B cell (primary cell): ENCODE measurements at regions of chr3 and their contacts with region 1.

Region 1: GRCh38 chr3:28348629-28349483 is at the starts of genes AZI2 and ZCWPW2:
- DNase-seq: peak; percentile 94
- ATAC-seq: peak; percentile 88
- H3K4me3 ChIP-seq: peak within 1 kb of the TSS; percentile 74 to 100 (median 92)
- H3K4me3 Mint-ChIP-seq: peak within 1 kb of the TSS; percentile 99
- H3K27ac ChIP-seq: peak within 1 kb of the TSS; percentile 96 to 99
- H3K27ac Mint-ChIP-seq: peak within 1 kb of the TSS; percentile 99
- H3K4me1 ChIP-seq: peaks cover 14 to 15% of the 10 kb centered on the region in 2 donors
- H3K4me1 Mint-ChIP-seq: peaks cover 39% of the 10 kb centered on the region
- H3K27me3 ChIP-seq: no peaks in the 10 kb centered on the region
- H3K27me3 Mint-ChIP-seq: no peaks in the 10 kb centered on the region
- CTCF ChIP-seq: peak; percentile 34
- total RNA-seq, gene AZI2: 21.1 and 29.1 TPM in 2 replicates
- total RNA-seq, gene ZCWPW2: not detected in 2 replicates

Region 2: GRCh38 chr3:27368831-27369607 is 979.8 kb before region 1 on chr3 and contains the start of gene NEK10:
- CTCF ChIA-PET with region 1: no interaction called
- POLR2A ChIA-PET with region 1: no interaction called
- intact Hi-C with region 1: loop called (anchors 2 kb)
- DNase-seq: peak; percentile 92
- ATAC-seq: peak; percentile 98
- H3K4me3 ChIP-seq: peak within 1 kb of the TSS; percentile 52 to 69 (median 61)
- H3K4me3 Mint-ChIP-seq: peak within 1 kb of the TSS; percentile 94
- H3K27ac ChIP-seq: no peak within 1 kb of the TSS
- H3K27ac Mint-ChIP-seq: peak within 1 kb of the TSS; percentile 78
- H3K4me1 ChIP-seq: peaks cover 7 to 14% of the 10 kb centered on the region in 2 donors
- H3K4me1 Mint-ChIP-seq: peaks cover 17% of the 10 kb centered on the region
- H3K27me3 ChIP-seq: no peaks in the 10 kb centered on the region
- H3K27me3 Mint-ChIP-seq: peaks cover 3% of the 10 kb centered on the region
- CTCF ChIP-seq: no peak
- total RNA-seq, gene NEK10: 0.36 and 0.49 TPM in 2 replicates

Region 3: DNA sequence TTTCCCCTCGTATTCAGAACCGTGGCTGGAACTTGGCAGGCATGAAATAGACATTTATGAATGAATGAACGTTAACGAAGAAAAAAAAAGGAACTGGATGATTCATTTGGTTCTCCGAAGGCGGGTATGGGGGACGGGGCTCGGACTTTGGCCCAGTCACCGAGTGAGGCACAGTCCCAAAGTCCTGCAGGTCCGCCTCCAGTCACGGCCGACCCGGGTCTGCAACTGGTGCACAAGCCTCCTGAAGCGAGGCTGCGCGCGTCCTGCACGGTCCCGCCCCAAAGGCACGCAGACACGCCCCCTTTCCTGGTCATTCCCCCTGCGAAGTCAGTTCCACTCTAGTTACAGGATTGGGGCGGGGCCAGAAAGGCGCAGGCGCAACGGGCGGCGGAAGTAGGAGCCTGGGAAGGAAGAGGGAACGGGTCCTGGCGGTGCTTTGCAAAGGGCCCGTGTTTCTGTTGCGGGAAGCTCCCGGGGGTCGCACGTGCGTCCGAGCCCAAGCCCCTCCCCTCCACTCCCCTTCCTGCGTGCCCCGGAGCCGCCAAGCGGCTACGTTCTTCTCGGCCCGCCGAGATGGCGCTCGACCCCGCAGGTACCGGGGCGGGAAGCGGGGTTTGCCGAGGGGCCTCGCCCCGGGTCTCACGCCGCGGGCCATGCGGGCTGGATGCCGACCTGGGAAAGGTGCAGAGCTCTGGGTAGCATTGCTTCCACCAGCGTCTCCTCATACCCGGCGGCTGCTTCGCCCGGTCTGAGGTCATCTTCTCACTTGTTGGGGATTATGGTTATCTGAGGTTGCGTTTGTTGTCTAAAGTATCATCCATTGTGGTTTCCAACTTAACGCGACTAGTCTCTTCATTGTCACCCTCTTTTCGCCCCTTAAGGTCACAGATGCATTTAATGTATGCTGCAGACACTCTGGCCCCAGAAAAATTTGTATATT is 107.4 kb before region 1 on chr3 and contains the start of gene CMC1:
- CTCF ChIA-PET with region 1: no interaction called
- POLR2A ChIA-PET with region 1: interaction called, 4 read pairs
- intact Hi-C with region 1: loop called (anchors 1 kb)
- DNase-seq: peak; percentile 87
- ATAC-seq: peak; percentile 95
- H3K4me3 ChIP-seq: peak within 1 kb of the TSS; percentile 71 to 88 (median 81)
- H3K4me3 Mint-ChIP-seq: peak within 1 kb of the TSS; percentile 98
- H3K27ac ChIP-seq: peak within 1 kb of the TSS; percentile 35 to 62
- H3K27ac Mint-ChIP-seq: peak within 1 kb of the TSS; percentile 96
- H3K4me1 ChIP-seq: peaks cover 17 to 22% of the 10 kb centered on the region in 2 donors
- H3K4me1 Mint-ChIP-seq: peaks cover 41% of the 10 kb centered on the region
- H3K27me3 ChIP-seq: no peaks in the 10 kb centered on the region
- H3K27me3 Mint-ChIP-seq: no peaks in the 10 kb centered on the region
- CTCF ChIP-seq: no peak
- total RNA-seq, gene CMC1: 14.5 and 16.7 TPM in 2 replicates